Activated naive CD4-positive, alpha-beta T cell treated with anti-CD3 and anti-CD28 coated beads for 36 hours (primary cell): ENCODE measurements at regions of chr1 and their contacts with region 1.

Region 1: DNA sequence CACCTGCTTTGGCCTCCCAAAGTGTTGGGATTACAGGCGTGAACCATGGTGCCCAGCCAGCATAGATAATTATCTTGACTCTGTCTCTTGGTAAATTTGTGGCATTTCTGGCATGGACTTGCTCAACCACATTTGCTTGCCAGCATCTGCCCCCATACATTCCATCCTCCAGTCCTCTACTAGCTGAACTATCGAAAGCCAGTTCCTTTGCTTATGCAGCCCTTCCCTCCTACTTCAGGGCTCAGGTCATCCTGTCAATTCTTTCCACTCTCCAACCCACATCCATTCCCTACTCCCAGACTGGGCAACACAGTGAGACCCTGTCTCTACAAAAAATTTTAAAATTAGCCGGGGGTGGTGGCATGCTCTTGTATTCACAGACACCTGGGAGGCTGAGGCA is 13.0 kb upstream of the UQCRHL start:
- DNase-seq: no peak
- H3K4me3 Mint-ChIP-seq: no peak overlapping the region
- H3K27ac Mint-ChIP-seq: no peak overlapping the region
- H3K4me1 Mint-ChIP-seq: peaks cover 5% of the 10 kb centered on the region
- H3K27me3 Mint-ChIP-seq: no peaks in the 10 kb centered on the region

Region 2: DNA sequence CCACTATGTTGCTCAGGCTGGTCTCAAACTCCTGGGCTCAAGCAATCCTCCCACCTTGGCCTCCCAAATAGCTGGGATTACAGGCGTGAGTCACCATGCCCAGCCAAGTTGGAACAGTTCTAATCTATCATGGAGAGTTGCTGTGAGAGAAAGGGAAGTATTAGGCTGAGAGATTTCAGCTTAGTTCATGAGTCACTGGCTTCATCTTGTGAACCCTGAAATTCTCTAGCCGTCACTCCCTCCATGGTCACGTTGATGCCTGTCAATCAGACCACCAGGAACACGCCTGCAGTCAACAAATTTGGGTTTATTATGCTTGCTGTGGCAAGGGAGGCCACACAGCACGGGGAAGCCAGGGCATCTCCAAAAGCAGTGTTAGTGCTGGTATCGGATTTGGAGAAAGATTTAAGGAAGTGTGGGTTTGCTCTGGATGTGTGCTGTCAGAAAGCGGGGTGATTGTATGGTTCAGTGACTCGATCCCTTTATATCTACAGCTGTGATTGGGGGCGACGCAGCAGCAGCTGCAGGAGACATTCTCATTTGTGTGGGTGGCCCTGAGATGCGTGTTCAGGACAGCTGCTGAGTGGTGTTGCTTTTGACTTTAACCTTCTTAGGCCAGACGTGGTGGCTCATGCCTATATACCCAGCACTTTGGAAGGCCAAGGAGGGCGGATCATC is 31.7 kb before region 1 on chr1:
- CTCF ChIA-PET with region 1: interaction called, 17 read pairs
- intact Hi-C with region 1: no loop called
- DNase-seq: no peak
- H3K4me3 Mint-ChIP-seq: no peak overlapping the region
- H3K27ac Mint-ChIP-seq: no peak overlapping the region
- H3K4me1 Mint-ChIP-seq: peaks cover 2% of the 10 kb centered on the region
- H3K27me3 Mint-ChIP-seq: no peaks in the 10 kb centered on the region

Region 3: DNA sequence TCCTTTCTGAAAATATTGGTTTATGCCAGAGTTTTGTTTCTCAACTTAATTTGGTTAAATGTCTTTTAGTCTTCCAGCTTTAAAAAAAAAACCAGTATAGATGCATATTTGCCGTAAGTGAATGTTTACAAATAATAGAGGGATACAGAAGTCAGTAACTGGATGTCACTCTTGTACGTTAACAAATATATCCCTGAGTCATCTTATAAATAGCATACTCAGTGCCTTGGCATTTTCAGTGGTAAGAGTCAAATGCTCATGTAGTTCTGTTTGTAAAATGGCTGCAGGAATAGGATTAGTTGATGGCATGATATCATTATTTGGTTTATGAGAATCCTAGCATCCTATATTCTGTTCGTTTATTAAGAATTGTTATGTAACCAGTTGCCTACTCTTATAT is 82.4 kb after region 1 on chr1:
- CTCF ChIA-PET with region 1: interaction called, 4 read pairs
- intact Hi-C with region 1: loop called (anchors 5 kb)
- DNase-seq: no peak
- H3K4me3 Mint-ChIP-seq: no peak overlapping the region
- H3K27ac Mint-ChIP-seq: no peak overlapping the region
- H3K4me1 Mint-ChIP-seq: peaks cover 37% of the 10 kb centered on the region
- H3K27me3 Mint-ChIP-seq: no peaks in the 10 kb centered on the region

Region 4: DNA sequence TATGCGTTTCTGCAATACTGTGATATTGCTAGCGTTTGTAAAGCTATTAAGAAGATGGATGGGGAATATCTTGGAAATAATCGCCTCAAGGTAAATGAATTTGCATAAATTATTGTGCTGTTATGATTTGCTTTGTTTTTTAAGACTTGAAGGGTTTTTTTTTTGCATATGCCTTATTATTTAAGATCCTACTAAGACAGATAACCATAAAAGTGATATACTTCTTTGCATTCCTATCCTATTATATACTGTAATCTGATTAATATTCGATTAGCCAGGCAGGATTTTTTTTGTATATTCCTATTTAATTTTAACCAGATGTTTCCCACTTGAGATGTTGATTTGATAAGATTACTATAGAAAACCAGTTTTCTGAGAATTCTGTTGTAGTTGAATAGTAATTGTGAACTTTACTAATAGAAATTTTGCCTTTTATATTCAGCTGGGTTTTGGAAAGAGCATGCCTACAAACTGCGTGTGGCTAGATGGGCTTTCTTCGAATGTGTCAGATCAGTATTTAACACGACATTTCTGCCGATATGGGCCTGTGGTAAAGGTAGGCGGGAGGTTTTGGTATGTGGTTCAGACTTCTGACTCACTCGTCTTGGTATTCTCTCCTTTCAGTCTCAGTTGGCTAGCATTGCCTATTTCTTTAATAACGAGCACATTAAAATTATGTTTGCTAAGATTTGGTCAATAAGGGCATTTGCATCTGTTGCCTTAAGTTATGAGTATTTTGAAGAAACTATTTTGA is 98.7 kb after region 1 on chr1:
- CTCF ChIA-PET with region 1: interaction called, 10 read pairs
- intact Hi-C with region 1: loop called (anchors 5 kb)
- DNase-seq: peak; percentile 82
- H3K4me3 Mint-ChIP-seq: no peak overlapping the region
- H3K27ac Mint-ChIP-seq: no peak overlapping the region
- H3K4me1 Mint-ChIP-seq: peaks cover 43% of the 10 kb centered on the region
- H3K27me3 Mint-ChIP-seq: no peaks in the 10 kb centered on the region

Region 5: DNA sequence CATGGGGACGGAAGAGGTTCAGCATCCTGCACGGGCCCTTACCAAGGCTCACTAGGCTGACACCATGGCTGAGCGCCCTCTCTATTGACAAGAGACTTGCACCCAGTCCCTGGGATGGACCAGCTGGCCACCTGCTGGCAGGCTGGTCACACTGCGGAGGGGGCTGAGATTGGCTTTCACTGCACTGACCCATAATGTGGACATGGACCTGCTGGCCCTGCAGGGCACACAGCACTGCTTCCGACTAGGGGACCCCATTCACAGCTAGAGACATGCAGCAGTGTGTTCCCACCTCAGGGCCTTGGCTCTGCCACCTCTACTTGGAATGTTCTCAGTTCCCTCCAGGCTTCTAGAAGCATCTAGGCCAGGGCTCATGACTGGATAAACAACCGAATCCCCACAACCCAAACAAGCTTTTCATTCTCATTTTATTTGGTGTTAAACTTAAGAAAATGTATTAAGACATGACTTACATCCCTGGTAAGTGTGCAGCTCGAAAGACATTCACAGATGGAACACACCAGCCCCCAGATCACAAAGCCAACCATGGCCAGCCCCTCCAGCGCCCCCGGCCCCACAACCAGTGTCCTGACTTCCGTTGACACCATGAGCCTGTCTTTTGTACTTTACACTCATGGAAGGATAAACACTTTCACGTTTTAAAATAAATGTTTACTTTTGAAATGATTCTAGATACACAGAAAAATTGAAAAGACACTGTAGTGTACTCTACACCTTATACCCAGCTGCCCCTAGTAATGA is 174.3 kb after region 1 on chr1:
- CTCF ChIA-PET with region 1: interaction called, 10 read pairs
- intact Hi-C with region 1: loop called (anchors 1 kb)
- DNase-seq: peak; percentile 68
- H3K4me3 Mint-ChIP-seq: no peak overlapping the region
- H3K27ac Mint-ChIP-seq: no peak overlapping the region
- H3K4me1 Mint-ChIP-seq: no peaks in the 10 kb centered on the region
- H3K27me3 Mint-ChIP-seq: no peaks in the 10 kb centered on the region

Region 6: DNA sequence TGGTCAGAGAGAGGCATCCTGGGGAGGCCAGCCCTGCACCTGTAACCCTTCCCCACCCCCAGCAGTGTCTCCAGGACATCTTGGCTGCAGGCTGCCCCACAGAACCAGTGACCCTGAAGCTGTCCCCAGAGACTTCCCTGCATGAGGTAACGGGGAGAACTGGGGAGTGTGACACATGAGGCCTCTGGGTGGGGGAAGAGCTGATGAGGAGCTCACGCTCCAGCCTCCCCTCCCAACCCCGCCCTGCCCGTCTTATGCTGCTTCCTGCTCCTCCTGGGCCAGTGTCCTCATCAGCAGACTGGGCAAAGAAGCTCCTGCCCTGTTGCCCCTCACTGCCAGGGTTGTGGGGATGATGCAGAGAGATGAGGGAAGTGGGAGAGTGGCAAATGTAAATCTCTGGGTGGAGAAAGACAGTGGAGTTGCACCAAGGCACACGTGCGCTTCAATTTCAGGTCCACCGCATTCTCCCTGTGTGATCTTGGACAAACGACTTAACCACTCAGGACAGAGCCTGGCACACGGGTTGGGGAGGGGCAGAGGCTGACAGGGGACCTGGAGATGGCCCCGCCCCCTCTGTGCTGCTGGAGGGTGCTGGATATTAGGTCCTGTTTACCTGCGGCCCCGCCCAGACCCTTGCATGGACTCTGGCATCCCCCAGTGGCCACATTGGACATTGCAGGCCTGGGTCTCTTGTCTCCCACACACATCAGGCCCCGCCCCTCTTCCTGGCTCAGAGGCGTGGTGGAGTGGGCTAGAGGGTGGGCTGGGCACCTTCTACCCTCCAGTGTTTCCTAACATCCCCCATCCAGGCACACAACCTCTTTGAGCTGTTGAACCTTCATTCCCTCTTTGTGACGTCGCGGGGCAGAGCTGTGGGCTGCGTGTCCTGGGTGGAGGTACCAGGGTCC is 235.4 kb after region 1 on chr1:
- CTCF ChIA-PET with region 1: interaction called, 3 read pairs
- intact Hi-C with region 1: loop called (anchors 1 kb)
- DNase-seq: peak; percentile 93
- H3K4me3 Mint-ChIP-seq: no peak overlapping the region
- H3K27ac Mint-ChIP-seq: no peak overlapping the region
- H3K4me1 Mint-ChIP-seq: peaks cover 2% of the 10 kb centered on the region
- H3K27me3 Mint-ChIP-seq: no peaks in the 10 kb centered on the region

Region 7: DNA sequence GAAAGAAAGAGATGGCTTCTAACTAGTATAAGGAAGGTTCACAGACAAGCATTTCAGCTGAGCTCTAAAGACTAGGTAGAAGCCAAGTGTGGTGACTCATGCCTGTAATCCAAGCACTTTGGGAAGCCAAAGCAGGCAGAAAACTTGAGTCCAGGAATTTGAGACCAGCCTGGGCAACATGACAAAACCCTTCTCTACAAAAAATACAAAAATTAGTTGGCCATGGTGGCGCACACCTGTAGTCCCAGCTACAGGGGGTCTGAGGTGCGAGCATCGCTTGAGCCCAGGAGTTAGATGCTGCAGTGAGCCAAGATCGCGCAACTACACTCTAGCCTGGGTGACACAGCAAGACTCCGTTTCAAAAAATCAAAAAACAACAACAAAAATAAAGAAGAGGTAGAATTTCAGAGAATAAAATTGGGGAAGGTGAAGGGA is 504.0 kb after region 1 on chr1:
- CTCF ChIA-PET with region 1: no interaction called
- intact Hi-C with region 1: no loop called
- DNase-seq: no peak
- H3K4me3 Mint-ChIP-seq: no peak overlapping the region
- H3K27ac Mint-ChIP-seq: no peak overlapping the region
- H3K4me1 Mint-ChIP-seq: peaks cover 21% of the 10 kb centered on the region
- H3K27me3 Mint-ChIP-seq: no peaks in the 10 kb centered on the region